ENCODE measurements at regions of chr11 and their contacts with region 1.

Region 1: GRCh38 chr11:30128269-30128932 is 102.4 kb upstream of the FSHB start:
- DNase-seq: peak; percentile 7
- CTCF ChIP-seq: peak; percentile 69

Region 2: DNA sequence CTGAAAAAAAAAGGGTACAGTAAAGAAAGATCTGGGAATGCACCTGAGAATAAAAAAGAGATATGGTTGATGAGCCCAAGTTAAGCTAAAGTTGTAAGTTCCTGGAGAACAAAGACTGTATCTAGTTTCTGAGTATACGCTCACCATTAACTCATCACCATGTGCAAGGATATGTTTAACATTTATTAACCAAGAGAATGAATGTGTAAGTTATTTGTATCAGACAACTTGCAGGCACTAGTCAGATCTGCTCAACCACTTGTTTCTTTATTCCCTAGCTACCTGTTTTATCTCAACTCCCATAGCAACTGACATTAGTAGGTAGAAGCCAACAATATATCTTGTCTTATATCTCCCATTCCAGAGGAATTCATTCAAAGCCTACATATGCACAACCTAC is 36.7 kb before region 1 on chr11:
- CTCF ChIA-PET with region 1: interaction called, 21 read pairs
- POLR2A ChIA-PET with region 1: no interaction called
- DNase-seq: no peak
- CTCF ChIP-seq: no peak

Region 3: GRCh38 chr11:30107899-30108298 is 20.5 kb before region 1 on chr11:
- CTCF ChIA-PET with region 1: interaction called, 72 read pairs
- POLR2A ChIA-PET with region 1: no interaction called
- DNase-seq: no peak
- CTCF ChIP-seq: no peak

Region 4: GRCh38 chr11:30113326-30113873 is 15.0 kb before region 1 on chr11:
- CTCF ChIA-PET with region 1: interaction called, 72 read pairs
- POLR2A ChIA-PET with region 1: no interaction called
- DNase-seq: no peak
- CTCF ChIP-seq: no peak

Region 5: GRCh38 chr11:30143098-30143705 is 14.8 kb after region 1 on chr11:
- CTCF ChIA-PET with region 1: interaction called, 280 read pairs
- POLR2A ChIA-PET with region 1: no interaction called
- DNase-seq: peak; percentile 13
- CTCF ChIP-seq: peak; percentile 72

Region 6: GRCh38 chr11:30196400-30197206 is 68.2 kb after region 1 on chr11:
- CTCF ChIA-PET with region 1: interaction called, 17 read pairs
- POLR2A ChIA-PET with region 1: no interaction called
- DNase-seq: peak; percentile 27
- CTCF ChIP-seq: peak; percentile 80

Region 7: GRCh38 chr11:30314625-30315024 is 186.2 kb after region 1 on chr11:
- CTCF ChIA-PET with region 1: interaction called, 38 read pairs
- POLR2A ChIA-PET with region 1: no interaction called
- DNase-seq: no peak
- CTCF ChIP-seq: peak; percentile 51